ENCODE measurements at regions of chr6 and their contacts with region 1.

Region 1: GRCh38 chr6:47097092-47097945 is 55.2 kb upstream of the ADGRF1 start:
- DNase-seq: peak; percentile 89
- ATAC-seq: peak; percentile 80
- H3K4me3 ChIP-seq: no peak overlapping the region
- H3K27ac ChIP-seq: no peak overlapping the region
- H3K4me1 ChIP-seq: peaks cover 59% of the 10 kb centered on the region
- H3K27me3 ChIP-seq: no peaks in the 10 kb centered on the region
- CTCF ChIP-seq: peak; percentile 91
- EP300 ChIP-seq: no peak
- POLR2A ChIP-seq: no peak
- RAD21 ChIP-seq: peak; percentile 94

Region 2: DNA sequence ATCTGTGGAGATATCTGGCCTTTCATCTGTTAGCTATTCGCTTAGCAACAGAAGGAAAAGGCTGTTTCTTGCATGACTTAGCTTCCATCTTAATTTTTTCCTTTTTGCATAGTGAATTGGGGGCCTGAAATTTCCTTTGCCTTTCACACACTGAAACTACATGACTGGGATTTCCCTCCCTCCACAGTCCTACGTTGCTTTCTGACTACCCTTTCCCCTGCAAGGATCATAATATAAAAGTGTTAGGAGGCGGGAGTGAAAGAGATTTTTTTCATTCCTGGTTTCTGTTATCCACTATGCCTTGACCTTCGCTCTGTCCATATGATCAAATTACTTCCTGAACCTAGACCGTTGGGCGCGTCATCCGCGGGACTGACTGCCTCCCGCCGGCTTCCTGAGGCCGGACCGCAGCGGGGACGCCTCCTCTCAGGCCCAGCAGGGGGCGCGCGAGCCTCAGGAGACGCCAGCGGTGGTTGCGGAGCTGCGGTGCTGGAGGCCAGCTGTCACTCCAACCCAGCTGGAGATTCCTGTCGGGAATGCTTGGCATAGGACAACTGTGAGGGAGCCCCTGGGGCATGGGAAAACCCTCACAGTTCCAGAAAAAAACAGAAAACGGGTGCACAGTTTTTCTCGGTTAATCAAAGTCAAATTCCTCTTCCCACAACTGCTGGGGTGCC is 248.5 kb before region 1 on chr6:
- CTCF ChIA-PET with region 1: no interaction called
- POLR2A ChIA-PET with region 1: no interaction called
- in situ Hi-C with region 1: no loop called
- intact Hi-C with region 1: loop called (anchors 1 kb)
- DNase-seq: peak; percentile 71
- ATAC-seq: peak; percentile 100
- H3K4me3 ChIP-seq: peak overlapping the region; percentile 3 to 19 (median 6); a peak in 2 of 6 replicates
- H3K27ac ChIP-seq: no peak overlapping the region
- H3K4me1 ChIP-seq: peaks cover 9% of the 10 kb centered on the region
- H3K27me3 ChIP-seq: peaks cover 0 to 10% of the 10 kb centered on the region in 2 experiments; a peak in 1 of 5 replicates
- CTCF ChIP-seq: peak; percentile 100
- EP300 ChIP-seq: no peak
- POLR2A ChIP-seq: no peak
- RAD21 ChIP-seq: peak; percentile 97

Region 3: DNA sequence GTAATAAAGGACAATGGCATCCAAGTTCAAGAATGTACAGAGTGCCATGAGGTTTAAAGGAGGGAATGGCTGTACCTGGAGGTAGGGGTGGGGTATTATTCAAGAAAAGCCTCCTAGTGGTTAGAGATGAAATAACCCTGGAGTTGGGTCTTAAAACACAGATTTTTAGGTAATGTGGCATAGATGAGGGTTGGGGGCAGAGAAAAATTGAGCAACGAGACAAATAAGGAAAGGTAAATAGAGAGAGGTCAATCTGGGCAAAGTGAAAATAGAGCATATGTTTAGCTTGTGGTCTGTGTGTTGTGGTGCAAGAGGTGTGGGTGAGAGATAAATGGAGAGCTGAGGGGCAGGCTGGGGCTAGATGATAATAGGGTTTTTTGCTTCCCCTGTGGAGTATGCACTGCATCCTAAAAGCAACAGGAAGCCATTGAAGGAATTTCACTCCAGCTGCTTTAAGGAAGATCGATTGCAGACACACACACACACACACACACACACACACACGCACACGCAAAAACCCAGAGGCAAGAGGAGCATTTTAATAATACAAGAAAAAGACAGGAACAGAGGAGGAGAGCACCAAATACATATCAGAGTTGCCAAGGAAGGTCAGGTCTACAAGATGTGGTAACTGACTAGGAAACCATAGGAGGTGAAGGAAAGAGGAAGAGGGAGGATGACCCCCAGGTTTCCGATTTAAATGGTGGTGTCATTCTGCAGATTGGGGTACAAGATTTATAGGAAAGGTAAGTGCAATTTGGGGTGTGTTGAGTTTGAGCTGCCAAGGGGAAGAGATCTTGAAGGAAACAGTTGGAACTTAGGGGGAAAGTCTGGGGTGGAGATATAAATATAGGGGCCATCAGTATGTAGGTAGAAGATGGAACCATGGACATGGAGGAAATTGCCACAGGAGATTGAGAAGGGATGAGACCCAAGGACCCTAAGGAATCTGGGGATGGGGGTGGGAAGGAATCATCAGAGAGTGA is 23.9 kb before region 1 on chr6:
- CTCF ChIA-PET with region 1: no interaction called
- POLR2A ChIA-PET with region 1: interaction called, 35 read pairs
- in situ Hi-C with region 1: no loop called
- intact Hi-C with region 1: loop called (anchors 1 kb)
- DNase-seq: peak; percentile 99
- ATAC-seq: peak; percentile 75
- H3K4me3 ChIP-seq: peak overlapping the region in 1 of 3 experiments; percentile 6; a peak in 1 of 6 replicates
- H3K27ac ChIP-seq: peak overlapping the region; percentile 93
- H3K4me1 ChIP-seq: peaks cover 73% of the 10 kb centered on the region
- H3K27me3 ChIP-seq: no peaks in the 10 kb centered on the region
- CTCF ChIP-seq: peak; percentile 77
- EP300 ChIP-seq: peak; percentile 98 to 100
- POLR2A ChIP-seq: no peak
- RAD21 ChIP-seq: peak; percentile 64

Region 4: GRCh38 chr6:47134476-47135189 is 37.3 kb after region 1 on chr6:
- CTCF ChIA-PET with region 1: no interaction called
- POLR2A ChIA-PET with region 1: no interaction called
- in situ Hi-C with region 1: no loop called
- intact Hi-C with region 1: loop called (anchors 2 kb)
- DNase-seq: peak; percentile 91
- ATAC-seq: peak; percentile 77
- H3K4me3 ChIP-seq: peak overlapping the region in 2 of 3 experiments; percentile 7; a peak in 2 of 6 replicates
- H3K27ac ChIP-seq: peak overlapping the region; percentile 74
- H3K4me1 ChIP-seq: peaks cover 84% of the 10 kb centered on the region
- H3K27me3 ChIP-seq: no peaks in the 10 kb centered on the region
- CTCF ChIP-seq: no peak
- EP300 ChIP-seq: peak in 1 of 2 experiments; percentile 97; a peak in 2 of 4 replicates
- POLR2A ChIP-seq: no peak
- RAD21 ChIP-seq: no peak

Region 5: DNA sequence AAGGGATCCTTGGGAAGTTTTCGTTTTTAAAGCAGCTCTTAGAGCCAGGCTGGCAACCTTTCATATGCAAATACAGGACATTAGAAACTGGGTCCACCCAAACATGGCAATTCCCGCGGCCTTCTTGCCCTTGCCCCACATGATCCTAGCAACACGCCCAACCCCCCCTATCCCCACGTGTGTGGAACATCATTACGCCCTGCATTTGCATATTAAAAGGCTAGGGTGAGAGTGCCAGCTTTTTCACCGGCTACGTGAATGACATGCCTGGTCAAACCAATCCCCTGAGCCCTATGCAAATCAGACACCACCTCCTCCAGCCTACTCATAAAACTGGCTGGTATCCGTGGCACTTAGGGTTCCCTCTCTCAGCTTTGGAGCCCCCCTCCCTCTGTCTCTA is 124.2 kb after region 1 on chr6:
- CTCF ChIA-PET with region 1: no interaction called
- POLR2A ChIA-PET with region 1: no interaction called
- in situ Hi-C with region 1: loop called (anchors 10 kb)
- intact Hi-C with region 1: loop called (anchors 1 kb)
- DNase-seq: no peak
- ATAC-seq: no peak; the same call in 2 of the 3 replicates
- H3K4me3 ChIP-seq: no peak overlapping the region
- H3K27ac ChIP-seq: no peak overlapping the region
- H3K4me1 ChIP-seq: no peaks in the 10 kb centered on the region
- H3K27me3 ChIP-seq: no peaks in the 10 kb centered on the region
- CTCF ChIP-seq: no peak
- EP300 ChIP-seq: no peak
- POLR2A ChIP-seq: no peak
- RAD21 ChIP-seq: no peak

Region 6: DNA sequence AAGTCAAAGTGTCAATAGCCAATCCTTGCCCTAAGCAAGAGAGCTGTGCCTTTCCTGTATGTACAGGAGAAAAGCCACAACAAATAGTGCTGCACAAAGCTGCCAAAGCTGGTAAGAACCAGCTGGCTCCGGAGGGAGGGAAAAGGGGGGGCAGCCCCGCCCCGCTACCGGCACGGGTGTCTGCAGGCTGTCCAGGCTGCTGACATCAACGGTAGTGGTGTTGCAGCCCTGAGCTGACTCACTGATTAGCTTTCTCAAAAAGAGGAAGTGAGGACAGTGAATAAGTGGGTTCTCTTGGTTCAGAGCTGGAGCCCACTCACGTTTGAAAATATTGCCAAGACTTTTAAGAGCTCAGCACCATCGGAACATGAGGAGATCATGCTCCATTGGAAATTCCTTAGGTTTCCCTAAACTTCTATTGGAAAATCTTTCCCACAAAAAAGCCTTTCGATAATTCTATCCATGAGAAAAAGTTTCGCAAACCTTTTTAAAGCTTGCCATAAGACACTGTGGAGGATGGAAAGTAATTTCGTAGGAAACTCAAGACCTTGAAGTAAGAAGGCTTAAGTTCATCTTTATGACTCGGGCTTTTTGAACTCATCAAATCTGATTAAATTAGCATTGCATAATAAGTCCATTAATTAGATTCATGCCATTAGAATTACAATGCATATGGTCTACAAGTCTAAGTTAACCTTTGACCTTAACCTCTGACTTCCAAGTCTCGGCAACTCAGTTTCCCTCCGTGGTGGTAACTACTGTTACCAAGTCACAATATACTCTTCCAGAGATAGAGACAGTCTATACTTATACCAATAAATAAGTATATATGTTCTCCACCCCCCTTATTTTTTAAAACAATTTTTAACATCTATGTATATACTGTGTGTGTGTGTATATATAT is 145.4 kb after region 1 on chr6:
- CTCF ChIA-PET with region 1: no interaction called
- POLR2A ChIA-PET with region 1: no interaction called
- in situ Hi-C with region 1: loop called (anchors 10 kb)
- intact Hi-C with region 1: loop called (anchors 5 kb)
- DNase-seq: no peak
- ATAC-seq: no peak
- H3K4me3 ChIP-seq: no peak overlapping the region
- H3K27ac ChIP-seq: no peak overlapping the region
- H3K4me1 ChIP-seq: peaks cover 8% of the 10 kb centered on the region
- H3K27me3 ChIP-seq: no peaks in the 10 kb centered on the region
- CTCF ChIP-seq: no peak
- EP300 ChIP-seq: no peak
- POLR2A ChIP-seq: no peak
- RAD21 ChIP-seq: no peak